Naive thymus-derived CD4-positive, alpha-beta T cell (primary cell): ENCODE measurements at regions of chr3 and their contacts with region 1.

Region 1: DNA sequence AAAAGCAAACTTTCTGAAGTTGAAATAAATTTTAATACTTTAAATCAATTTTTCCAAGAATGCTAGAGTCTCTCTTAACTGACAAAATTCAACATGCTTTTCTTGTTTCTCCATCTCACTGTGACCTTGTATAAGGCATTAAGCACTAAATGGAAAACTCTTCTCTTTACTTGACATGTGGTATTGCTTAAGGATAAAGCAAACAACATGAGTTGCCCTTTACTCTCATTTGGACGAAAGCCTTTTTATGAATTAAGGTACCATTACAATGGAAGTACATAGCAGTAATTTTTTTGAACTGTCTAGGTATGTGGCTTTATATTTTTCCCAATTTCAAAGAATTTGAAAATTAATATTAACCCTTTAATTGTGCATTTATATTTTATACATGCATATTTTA is 1.4 kb downstream of the STRIT1 start:
- DNase-seq: no peak
- ATAC-seq: no peak
- H3K4me3 ChIP-seq: no peak overlapping the region
- H3K4me3 Mint-ChIP-seq: no peak overlapping the region
- H3K27ac ChIP-seq: no peak overlapping the region
- H3K27ac Mint-ChIP-seq: no peak overlapping the region
- H3K4me1 ChIP-seq: no peaks in the 10 kb centered on the region
- H3K4me1 Mint-ChIP-seq: no peaks in the 10 kb centered on the region
- H3K27me3 ChIP-seq: no peaks in the 10 kb centered on the region
- H3K27me3 Mint-ChIP-seq: peaks cover 0 to 7% (median 3%) of the 10 kb centered on the region in 5 donors

Region 2: GRCh38 chr3:154224366-154225265 is 1067.5 kb before region 1 on chr3:
- CTCF ChIA-PET with region 1: no interaction called
- POLR2A ChIA-PET with region 1: no interaction called
- intact Hi-C with region 1: loop called in 1 of 2 experiments (anchors 10 kb)
- DNase-seq: no peak
- ATAC-seq: no peak
- H3K4me3 ChIP-seq: no peak overlapping the region
- H3K4me3 Mint-ChIP-seq: no peak overlapping the region
- H3K27ac ChIP-seq: no peak overlapping the region
- H3K27ac Mint-ChIP-seq: no peak overlapping the region
- H3K4me1 ChIP-seq: no peaks in the 10 kb centered on the region
- H3K4me1 Mint-ChIP-seq: no peaks in the 10 kb centered on the region
- H3K27me3 ChIP-seq: no peaks in the 10 kb centered on the region
- H3K27me3 Mint-ChIP-seq: peaks cover 0 to 5% (median 3%) of the 10 kb centered on the region in 5 donors

Region 3: DNA sequence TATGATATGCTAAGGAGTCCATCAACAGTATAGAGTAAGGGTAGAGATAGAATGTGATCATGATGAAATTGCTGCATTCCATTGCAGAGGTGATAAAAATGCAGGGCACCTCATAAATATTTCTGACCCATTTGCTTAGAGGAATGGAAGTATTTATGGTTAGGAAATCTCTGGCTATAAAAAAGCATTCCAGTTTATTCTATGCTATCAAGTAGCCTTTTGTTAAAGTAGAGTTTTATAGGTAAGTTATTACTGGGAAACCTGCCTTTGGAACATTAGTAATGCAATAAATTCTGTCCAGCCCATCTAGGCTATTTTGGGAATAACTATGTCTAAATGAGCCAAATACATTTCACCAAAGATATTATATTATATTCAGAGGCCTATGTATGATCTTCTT is 21.2 kb after region 1 on chr3:
- CTCF ChIA-PET with region 1: no interaction called
- POLR2A ChIA-PET with region 1: no interaction called
- intact Hi-C with region 1: no loop called
- DNase-seq: no peak
- ATAC-seq: no peak
- H3K4me3 ChIP-seq: no peak overlapping the region
- H3K4me3 Mint-ChIP-seq: no peak overlapping the region
- H3K27ac ChIP-seq: no peak overlapping the region
- H3K27ac Mint-ChIP-seq: no peak overlapping the region
- H3K4me1 ChIP-seq: no peaks in the 10 kb centered on the region
- H3K4me1 Mint-ChIP-seq: no peaks in the 10 kb centered on the region
- H3K27me3 ChIP-seq: no peaks in the 10 kb centered on the region
- H3K27me3 Mint-ChIP-seq: no peaks in the 10 kb centered on the region

Region 4: GRCh38 chr3:155519078-155519477 is 226.9 kb after region 1 on chr3:
- CTCF ChIA-PET with region 1: no interaction called
- POLR2A ChIA-PET with region 1: no interaction called
- intact Hi-C with region 1: no loop called
- DNase-seq: no peak
- ATAC-seq: no peak
- H3K4me3 ChIP-seq: no peak overlapping the region
- H3K4me3 Mint-ChIP-seq: no peak overlapping the region
- H3K27ac ChIP-seq: no peak overlapping the region
- H3K27ac Mint-ChIP-seq: no peak overlapping the region
- H3K4me1 ChIP-seq: no peaks in the 10 kb centered on the region
- H3K4me1 Mint-ChIP-seq: no peaks in the 10 kb centered on the region
- H3K27me3 ChIP-seq: no peaks in the 10 kb centered on the region
- H3K27me3 Mint-ChIP-seq: no peaks in the 10 kb centered on the region

Region 5: GRCh38 chr3:155682426-155683343 is 390.6 kb after region 1 on chr3:
- CTCF ChIA-PET with region 1: no interaction called
- POLR2A ChIA-PET with region 1: no interaction called
- intact Hi-C with region 1: no loop called
- DNase-seq: no peak
- ATAC-seq: no peak
- H3K4me3 ChIP-seq: no peak overlapping the region
- H3K4me3 Mint-ChIP-seq: no peak overlapping the region
- H3K27ac ChIP-seq: no peak overlapping the region
- H3K27ac Mint-ChIP-seq: no peak overlapping the region
- H3K4me1 ChIP-seq: no peaks in the 10 kb centered on the region
- H3K4me1 Mint-ChIP-seq: no peaks in the 10 kb centered on the region
- H3K27me3 ChIP-seq: no peaks in the 10 kb centered on the region
- H3K27me3 Mint-ChIP-seq: peaks cover 0 to 14% (median 0%) of the 10 kb centered on the region in 5 donors